ENCODE measurements at regions of chr10 and their contacts with region 1.

Region 1: DNA sequence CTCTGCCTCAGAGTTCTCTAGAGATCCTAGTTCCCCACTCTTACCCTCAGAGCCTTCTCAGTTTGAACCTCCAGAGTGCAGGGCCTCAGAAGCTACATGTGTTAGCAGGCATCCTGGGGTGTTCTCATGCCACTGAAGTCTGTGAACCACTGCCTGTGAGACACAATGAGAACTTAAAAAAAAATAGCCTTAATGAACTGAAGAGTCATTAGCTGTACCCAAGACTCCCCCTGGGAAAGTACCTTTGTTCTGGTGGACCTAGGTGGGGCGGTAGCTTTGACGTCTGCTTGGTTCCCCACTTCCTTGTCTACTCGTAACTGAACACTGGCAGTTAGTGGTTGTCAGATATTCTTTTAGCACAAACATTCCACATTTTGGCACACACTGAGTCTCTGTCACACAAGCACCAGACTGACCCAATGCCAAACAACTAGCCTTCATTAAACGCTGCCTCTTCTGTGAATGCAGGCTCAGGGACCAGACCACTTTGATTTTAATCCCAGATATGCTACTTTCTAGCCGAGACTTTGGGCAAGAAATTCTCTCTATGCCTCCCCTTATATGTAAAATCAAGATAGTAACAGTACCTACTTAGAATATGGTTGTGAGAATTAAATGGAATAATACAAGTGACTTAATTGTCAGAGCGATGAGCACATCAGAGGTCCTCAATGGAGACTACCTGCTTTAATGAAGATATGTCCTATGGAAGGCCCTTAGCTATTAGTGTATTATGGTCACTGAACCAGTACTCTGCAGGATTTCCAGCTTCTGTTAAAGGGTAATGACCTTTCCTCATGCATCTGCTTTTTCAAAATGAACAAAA is 75.3 kb upstream of the CC2D2B start:
- DNase-seq: peak; percentile 94
- ATAC-seq: peak; percentile 89
- H3K4me3 ChIP-seq: peak overlapping the region in 3 of 5 experiments; percentile 11 to 36 (median 23)
- H3K4me3 Mint-ChIP-seq: peak overlapping the region; percentile 83
- H3K27ac ChIP-seq: peak overlapping the region; percentile 89 to 95
- H3K27ac Mint-ChIP-seq: peak overlapping the region; percentile 96
- H3K4me1 ChIP-seq: peaks cover 82 to 87% of the 10 kb centered on the region in 2 donors
- H3K4me1 Mint-ChIP-seq: peaks cover 82% of the 10 kb centered on the region
- H3K27me3 ChIP-seq: no peaks in the 10 kb centered on the region
- H3K27me3 Mint-ChIP-seq: no peaks in the 10 kb centered on the region
- CTCF ChIP-seq: no peak

Region 2: GRCh38 chr10:95618126-95618525 is 214.3 kb before region 1 on chr10:
- CTCF ChIA-PET with region 1: no interaction called
- POLR2A ChIA-PET with region 1: no interaction called
- intact Hi-C with region 1: no loop called
- DNase-seq: no peak
- ATAC-seq: no peak
- H3K4me3 ChIP-seq: no peak overlapping the region
- H3K4me3 Mint-ChIP-seq: no peak overlapping the region
- H3K27ac ChIP-seq: no peak overlapping the region
- H3K27ac Mint-ChIP-seq: no peak overlapping the region
- H3K4me1 ChIP-seq: no peaks in the 10 kb centered on the region
- H3K4me1 Mint-ChIP-seq: no peaks in the 10 kb centered on the region
- H3K27me3 ChIP-seq: no peaks in the 10 kb centered on the region
- H3K27me3 Mint-ChIP-seq: no peaks in the 10 kb centered on the region
- CTCF ChIP-seq: no peak

Region 3: DNA sequence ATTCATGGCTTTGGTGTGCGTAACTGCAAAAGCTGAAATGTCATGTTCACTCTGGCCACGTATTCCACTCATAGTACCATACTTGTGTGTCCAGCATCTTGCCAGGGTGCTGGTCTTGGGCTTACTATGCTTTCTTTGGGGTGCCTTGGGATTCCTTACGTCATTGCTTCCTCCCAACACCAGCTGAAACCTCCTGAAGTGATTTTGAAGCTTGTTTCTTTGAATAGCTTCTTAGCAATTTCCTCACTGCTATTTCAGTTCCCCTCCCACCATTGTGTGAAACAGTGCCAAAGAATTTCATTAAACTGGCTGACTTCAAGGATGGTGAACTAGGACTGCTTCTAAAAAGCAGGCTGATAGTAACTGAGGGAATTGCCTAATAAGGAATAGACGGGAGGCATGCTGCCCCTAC is 39.5 kb before region 1 on chr10:
- CTCF ChIA-PET with region 1: interaction called, 12 read pairs
- POLR2A ChIA-PET with region 1: interaction called, 8 read pairs
- intact Hi-C with region 1: loop called (anchors 2 kb)
- DNase-seq: peak; percentile 43
- ATAC-seq: no peak
- H3K4me3 ChIP-seq: peak overlapping the region in 1 of 5 experiments; percentile 21
- H3K4me3 Mint-ChIP-seq: peak overlapping the region; percentile 38
- H3K27ac ChIP-seq: peak overlapping the region; percentile 83 to 85
- H3K27ac Mint-ChIP-seq: peak overlapping the region; percentile 91
- H3K4me1 ChIP-seq: peaks cover 69 to 74% of the 10 kb centered on the region in 2 donors
- H3K4me1 Mint-ChIP-seq: peaks cover 87% of the 10 kb centered on the region
- H3K27me3 ChIP-seq: no peaks in the 10 kb centered on the region
- H3K27me3 Mint-ChIP-seq: no peaks in the 10 kb centered on the region
- CTCF ChIP-seq: no peak

Measured in B cell (primary cell).